Common myeloid progenitor, CD34-positive (primary cell): ENCODE measurements at regions of chr6 and their contacts with region 1.

Region 1: DNA sequence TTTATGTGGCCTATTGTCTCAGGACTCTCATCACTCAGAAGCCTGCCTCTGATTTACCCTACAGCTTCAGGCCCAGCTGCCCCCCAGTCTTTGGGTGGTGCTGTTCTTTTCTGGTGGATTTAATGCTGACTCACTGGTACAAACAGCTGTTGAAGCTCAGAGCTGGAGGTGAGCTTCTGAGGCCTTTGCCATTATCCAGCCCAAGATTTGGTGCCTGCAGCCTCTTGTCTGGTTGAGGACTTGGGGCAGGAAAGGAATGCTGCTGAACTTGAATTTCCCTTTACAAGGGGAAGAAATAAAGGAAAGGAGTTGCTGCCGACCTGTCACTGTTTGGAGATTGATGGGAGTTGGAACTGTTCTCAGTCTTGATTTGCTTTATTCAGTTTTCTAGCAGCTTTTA is 19.8 kb downstream of the ABCF1 start:
- DNase-seq: peak in 2 of 3 donors; percentile 23 to 33
- H3K4me3 ChIP-seq: no peak overlapping the region
- H3K27ac ChIP-seq: peak overlapping the region in 1 of 2 experiments; percentile 27
- H3K4me1 ChIP-seq: no peaks in the 10 kb centered on the region
- H3K27me3 ChIP-seq: no peaks in the 10 kb centered on the region

Region 2: DNA sequence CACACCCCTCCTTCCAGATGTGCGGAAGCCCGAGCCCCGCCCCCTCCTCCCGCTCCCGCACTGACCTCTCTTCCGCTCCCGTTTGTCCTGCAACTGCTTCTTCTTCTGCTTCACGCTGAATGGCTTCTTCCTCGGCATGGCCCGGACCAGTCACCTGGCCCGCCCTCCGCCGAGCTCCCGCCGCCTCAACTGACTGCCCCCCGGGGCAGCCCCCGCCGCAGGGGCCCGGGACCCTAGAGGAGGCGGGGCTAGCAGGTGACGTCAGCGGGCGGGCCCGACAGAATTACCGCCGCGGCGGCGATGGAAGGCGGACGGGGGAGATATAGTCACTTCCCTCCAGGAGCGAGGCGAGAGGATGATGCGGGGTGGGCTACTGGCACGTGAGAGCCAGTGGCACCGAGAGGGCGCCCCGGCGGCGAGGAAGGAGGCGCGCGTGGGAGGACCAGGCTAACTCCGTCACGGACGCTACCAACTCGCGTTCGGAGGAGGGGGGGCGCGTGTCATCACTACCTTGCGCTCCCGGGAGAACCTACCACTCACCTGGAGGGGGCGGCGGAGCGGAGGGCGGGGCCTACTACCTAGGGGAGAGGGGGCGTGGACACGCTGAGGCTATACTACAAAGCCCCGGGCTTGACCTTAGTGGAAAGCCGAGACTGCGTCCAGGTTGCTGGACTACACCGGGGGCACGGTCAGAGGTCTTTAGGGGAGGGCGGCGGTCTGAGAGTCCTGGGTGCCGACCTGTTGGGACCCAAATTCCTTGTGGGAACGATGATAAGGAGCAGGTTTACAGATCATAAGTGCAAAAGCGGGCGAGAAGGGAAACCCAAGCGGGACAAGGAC is 34.7 kb before region 1 on chr6 and contains the start of gene GNL1:
- CTCF ChIA-PET with region 1: interaction called, 11 read pairs
- POLR2A ChIA-PET with region 1: no interaction called
- DNase-seq: peak; percentile 96 to 98 (median 97)
- H3K4me3 ChIP-seq: peak within 1 kb of the TSS; percentile 86 to 95 (median 89)
- H3K27ac ChIP-seq: peak within 1 kb of the TSS; percentile 88 to 93
- H3K4me1 ChIP-seq: peaks cover 8 to 30% (median 23%) of the 10 kb centered on the region in 4 experiments
- H3K27me3 ChIP-seq: no peaks in the 10 kb centered on the region

Region 3: GRCh38 chr6:30578051-30578450 is 12.9 kb before region 1 on chr6:
- CTCF ChIA-PET with region 1: interaction called, 23 read pairs
- POLR2A ChIA-PET with region 1: interaction called, 4 read pairs
- DNase-seq: no peak
- H3K4me3 ChIP-seq: no peak overlapping the region
- H3K27ac ChIP-seq: no peak overlapping the region
- H3K4me1 ChIP-seq: peaks cover 0 to 11% (median 2%) of the 10 kb centered on the region in 4 experiments
- H3K27me3 ChIP-seq: no peaks in the 10 kb centered on the region

Region 4: GRCh38 chr6:30616811-30617564 is 26.0 kb after region 1 on chr6 and contains the start of gene PPP1R10:
- CTCF ChIA-PET with region 1: interaction called, 53 read pairs
- POLR2A ChIA-PET with region 1: interaction called, 3 read pairs
- DNase-seq: peak; percentile 100
- H3K4me3 ChIP-seq: peak within 1 kb of the TSS; percentile 74 to 100 (median 100)
- H3K27ac ChIP-seq: peak within 1 kb of the TSS; percentile 100
- H3K4me1 ChIP-seq: peaks cover 18 to 42% (median 29%) of the 10 kb centered on the region in 4 experiments
- H3K27me3 ChIP-seq: no peaks in the 10 kb centered on the region

Region 5: DNA sequence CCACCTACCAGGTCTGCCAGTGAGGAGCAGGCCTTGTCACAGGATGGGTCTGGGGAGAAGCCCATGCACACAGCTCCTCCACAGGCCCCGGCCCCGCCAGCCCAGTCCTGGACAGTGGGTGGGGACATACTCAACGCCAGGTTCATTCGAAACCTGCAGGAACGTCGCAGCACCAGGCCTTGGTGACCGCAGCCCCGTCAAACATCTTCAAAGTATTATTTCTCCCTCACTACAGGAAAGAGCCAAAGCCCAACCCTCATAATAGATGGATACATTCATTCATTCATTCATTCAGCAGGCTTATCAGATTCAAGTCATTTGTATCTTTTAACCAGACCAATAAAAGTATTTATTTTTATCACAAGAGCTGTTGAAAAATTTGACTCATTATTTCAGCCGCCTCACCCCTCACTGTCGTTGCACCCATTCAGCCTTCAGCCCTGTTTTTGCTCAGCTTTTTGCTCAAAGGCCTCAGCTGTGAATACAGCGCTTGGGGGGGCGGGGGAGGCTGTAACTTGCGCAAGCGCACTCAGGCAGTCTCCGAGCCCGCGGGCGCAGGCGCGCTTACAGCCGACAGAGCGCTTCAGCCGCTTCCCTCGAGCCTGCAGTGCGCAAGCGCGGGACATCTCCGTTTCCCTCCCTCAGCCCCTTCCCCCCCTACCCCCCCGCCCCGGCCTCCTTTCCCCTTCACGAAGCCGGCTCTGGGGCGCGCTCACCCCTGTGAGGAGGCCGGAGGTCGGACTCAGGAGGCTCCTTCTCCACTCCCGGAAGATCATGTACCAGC is 55.7 kb after region 1 on chr6 and contains the start of gene C6orf136:
- CTCF ChIA-PET with region 1: no interaction called
- POLR2A ChIA-PET with region 1: no interaction called
- DNase-seq: peak; percentile 93 to 97 (median 95)
- H3K4me3 ChIP-seq: peak within 1 kb of the TSS; percentile 54 to 97 (median 91)
- H3K27ac ChIP-seq: peak within 1 kb of the TSS in 1 of 2 experiments; percentile 85
- H3K4me1 ChIP-seq: peaks cover 11 to 49% (median 38%) of the 10 kb centered on the region in 4 experiments
- H3K27me3 ChIP-seq: no peaks in the 10 kb centered on the region

Region 6: DNA sequence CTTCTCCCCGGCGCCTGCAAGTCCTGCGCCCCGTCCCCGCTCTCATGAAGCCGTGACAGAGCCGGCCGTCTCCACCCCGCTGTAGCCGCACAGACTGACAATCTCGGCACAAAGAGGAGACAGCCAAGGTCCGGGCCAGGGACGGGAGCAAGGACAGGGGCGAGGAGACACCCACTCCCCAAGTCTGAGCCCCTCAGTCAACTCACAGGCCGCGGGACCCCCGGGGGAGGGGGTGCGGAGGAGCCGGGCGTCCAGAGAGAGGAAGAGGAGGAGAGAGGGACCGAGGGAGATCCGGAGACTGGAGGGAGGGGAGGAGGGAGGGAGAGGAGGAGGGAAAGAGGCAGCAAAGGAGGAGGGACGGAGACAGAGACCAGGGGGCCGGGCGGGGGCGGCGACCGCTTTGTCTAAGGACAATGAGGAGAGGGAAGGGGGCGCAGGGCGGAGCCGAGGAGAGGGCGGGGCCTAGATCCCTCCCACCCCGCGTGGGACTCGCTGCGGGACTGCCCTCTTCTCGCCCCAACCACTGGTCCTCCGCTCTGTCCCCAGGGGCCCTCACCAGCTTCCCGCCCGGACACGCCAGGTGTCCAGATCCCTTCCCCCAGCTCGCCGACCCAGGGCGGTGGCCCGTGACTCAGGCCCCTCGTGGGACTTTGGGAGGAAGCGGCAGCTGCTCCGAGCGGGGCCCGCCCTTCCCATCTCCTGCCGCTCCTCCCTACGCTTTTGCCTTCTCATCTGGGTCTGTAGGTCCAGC is 96.1 kb after region 1 on chr6:
- CTCF ChIA-PET with region 1: no interaction called
- POLR2A ChIA-PET with region 1: no interaction called
- DNase-seq: peak; percentile 59 to 84 (median 78)
- H3K4me3 ChIP-seq: peak overlapping the region; percentile 85 to 96 (median 89)
- H3K27ac ChIP-seq: peak overlapping the region; percentile 66 to 94
- H3K4me1 ChIP-seq: peaks cover 16 to 77% (median 73%) of the 10 kb centered on the region in 4 experiments
- H3K27me3 ChIP-seq: no peaks in the 10 kb centered on the region

Region 7: GRCh38 chr6:30730601-30731435 is 139.8 kb after region 1 on chr6:
- CTCF ChIA-PET with region 1: interaction called, 15 read pairs
- POLR2A ChIA-PET with region 1: no interaction called
- DNase-seq: peak; percentile 79 to 86 (median 85)
- H3K4me3 ChIP-seq: peak overlapping the region in 3 of 7 experiments; percentile 31 to 42 (median 41)
- H3K27ac ChIP-seq: no peak overlapping the region
- H3K4me1 ChIP-seq: peaks cover 0 to 26% (median 14%) of the 10 kb centered on the region in 4 experiments
- H3K27me3 ChIP-seq: no peaks in the 10 kb centered on the region